AG04449 (cell line): ENCODE measurements at regions of chr7 and their contacts with region 1.

Region 1: GRCh38 chr7:4631664-4632171 is 50.4 kb upstream of the FOXK1 start:
- DNase-seq: peak; percentile 60
- H3K4me3 ChIP-seq: peak overlapping the region; percentile 53
- CTCF ChIP-seq: peak; percentile 79

Region 2: DNA sequence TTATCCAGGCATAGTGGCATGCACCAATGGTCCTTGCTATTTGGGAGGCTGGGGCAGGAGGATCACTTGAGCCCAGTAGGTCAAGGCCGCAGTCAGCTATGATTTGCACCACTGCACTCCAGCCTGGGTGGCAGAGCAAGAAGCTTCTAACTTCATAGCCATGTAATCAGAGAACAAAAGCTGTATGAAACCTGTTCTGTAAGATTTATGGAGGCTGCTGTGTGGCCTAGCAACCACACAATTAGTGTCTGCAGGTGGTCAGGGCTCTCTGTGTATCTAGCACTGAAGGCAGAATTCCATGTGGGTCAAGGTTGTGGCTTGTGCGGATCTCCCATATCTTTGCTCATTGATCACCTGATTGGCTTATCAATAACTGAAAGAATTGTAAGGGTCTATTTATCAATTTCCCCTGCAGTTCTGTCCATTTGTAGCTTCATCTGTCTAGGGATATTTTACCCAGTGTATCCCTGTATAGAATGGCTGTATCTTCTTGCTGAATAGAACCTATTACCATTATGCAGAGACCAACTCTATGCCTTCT is 171.1 kb before region 1 on chr7:
- CTCF ChIA-PET with region 1: no interaction called
- POLR2A ChIA-PET with region 1: no interaction called
- DNase-seq: no peak
- H3K4me3 ChIP-seq: no peak overlapping the region
- CTCF ChIP-seq: no peak

Region 3: DNA sequence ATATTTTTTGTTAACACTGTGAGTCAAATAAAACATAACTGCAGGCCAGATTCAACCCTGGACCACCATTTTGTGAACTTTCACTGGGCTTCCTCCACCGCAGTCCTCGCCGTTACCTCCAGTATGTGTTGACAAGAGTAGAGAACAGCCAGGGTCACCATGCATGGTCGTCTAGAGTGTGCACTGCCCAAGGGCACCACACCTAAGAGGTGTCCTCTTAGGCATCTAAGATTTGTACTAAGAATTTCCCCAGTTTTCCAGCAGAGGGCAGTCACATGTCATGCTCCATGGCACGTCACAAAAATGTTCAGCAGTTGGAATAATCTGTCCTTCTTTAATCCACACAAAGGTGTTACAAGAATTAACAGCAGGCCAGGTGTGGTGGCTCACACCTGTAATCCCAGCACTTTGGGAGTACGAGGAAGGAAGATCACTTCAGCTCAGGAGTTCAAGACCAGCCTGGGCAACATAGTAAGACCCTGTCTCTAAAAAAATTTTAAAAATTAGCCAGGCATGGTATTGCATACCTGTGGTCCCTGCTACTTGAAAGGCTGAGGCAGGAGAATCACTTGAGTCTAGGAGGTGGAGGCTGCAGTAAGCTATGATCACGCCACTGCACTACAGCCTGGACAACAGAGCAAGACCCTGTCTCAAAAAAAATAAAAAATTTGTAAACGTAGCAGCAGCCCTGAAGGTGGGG is 20.8 kb before region 1 on chr7:
- CTCF ChIA-PET with region 1: interaction called, 122 read pairs
- POLR2A ChIA-PET with region 1: no interaction called
- DNase-seq: no peak
- H3K4me3 ChIP-seq: no peak overlapping the region
- CTCF ChIP-seq: peak; percentile 69

Region 4: GRCh38 chr7:4851459-4852422 is 220.0 kb after region 1 on chr7:
- CTCF ChIA-PET with region 1: no interaction called
- POLR2A ChIA-PET with region 1: no interaction called
- DNase-seq: no peak
- H3K4me3 ChIP-seq: no peak overlapping the region
- CTCF ChIP-seq: no peak

Region 5: GRCh38 chr7:4965295-4966022 is 333.7 kb after region 1 on chr7:
- CTCF ChIA-PET with region 1: no interaction called
- POLR2A ChIA-PET with region 1: no interaction called
- DNase-seq: no peak
- H3K4me3 ChIP-seq: no peak overlapping the region
- CTCF ChIP-seq: no peak